CD4-positive, alpha-beta T cell (primary cell): ENCODE measurements at regions of chr16 and their contacts with region 1.

Region 1: GRCh38 chr16:67260426-67261075 is 11.8 kb downstream of the SLC9A5 start:
- DNase-seq: peak in 4 of 14 experiments; percentile 24 to 47 (median 32)
- ATAC-seq: no peak
- H3K4me3 ChIP-seq: no peak overlapping the region
- H3K4me3 Mint-ChIP-seq: no peak overlapping the region
- H3K27ac ChIP-seq: no peak overlapping the region
- H3K27ac Mint-ChIP-seq: no peak overlapping the region
- H3K4me1 ChIP-seq: no peaks in the 10 kb centered on the region
- H3K4me1 Mint-ChIP-seq: no peaks in the 10 kb centered on the region
- H3K27me3 ChIP-seq: peaks cover 6 to 12% of the 10 kb centered on the region in 2 experiments
- H3K27me3 Mint-ChIP-seq: peaks cover 12% of the 10 kb centered on the region
- CTCF ChIP-seq: peak; percentile 10

Region 2: GRCh38 chr16:67216612-67217490 is 43.7 kb before region 1 on chr16:
- CTCF ChIA-PET with region 1: no interaction called
- POLR2A ChIA-PET with region 1: no interaction called
- intact Hi-C with region 1: no loop called
- DNase-seq: no peak
- ATAC-seq: no peak
- H3K4me3 ChIP-seq: no peak overlapping the region
- H3K4me3 Mint-ChIP-seq: no peak overlapping the region
- H3K27ac ChIP-seq: no peak overlapping the region
- H3K27ac Mint-ChIP-seq: no peak overlapping the region
- H3K4me1 ChIP-seq: no peaks in the 10 kb centered on the region
- H3K4me1 Mint-ChIP-seq: no peaks in the 10 kb centered on the region
- H3K27me3 ChIP-seq: no peaks in the 10 kb centered on the region
- H3K27me3 Mint-ChIP-seq: no peaks in the 10 kb centered on the region
- CTCF ChIP-seq: no peak

Region 3: DNA sequence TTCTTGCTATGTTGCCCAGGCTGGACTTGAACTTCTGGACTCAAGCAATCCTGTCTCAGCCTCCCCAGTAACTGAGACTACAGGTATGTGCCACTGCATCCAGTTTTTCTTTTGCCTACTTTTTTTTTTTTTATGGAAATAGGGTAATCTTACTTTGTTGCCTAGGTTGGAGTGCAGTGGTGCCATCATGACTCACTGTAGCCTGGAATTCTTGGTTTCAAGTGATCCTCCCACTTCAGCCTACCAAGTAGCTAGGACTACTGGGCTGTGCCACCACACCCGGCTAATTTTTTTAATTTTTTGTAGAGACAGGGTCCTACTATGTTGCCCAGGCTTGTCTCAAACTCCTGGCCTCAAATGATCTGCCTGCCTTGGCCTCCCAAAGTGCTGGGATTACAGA is 76.1 kb after region 1 on chr16:
- CTCF ChIA-PET with region 1: no interaction called
- POLR2A ChIA-PET with region 1: no interaction called
- intact Hi-C with region 1: no loop called
- DNase-seq: no peak
- ATAC-seq: no peak
- H3K4me3 ChIP-seq: no peak overlapping the region
- H3K4me3 Mint-ChIP-seq: no peak overlapping the region
- H3K27ac ChIP-seq: no peak overlapping the region
- H3K27ac Mint-ChIP-seq: no peak overlapping the region
- H3K4me1 ChIP-seq: no peaks in the 10 kb centered on the region
- H3K4me1 Mint-ChIP-seq: no peaks in the 10 kb centered on the region
- H3K27me3 ChIP-seq: no peaks in the 10 kb centered on the region
- H3K27me3 Mint-ChIP-seq: no peaks in the 10 kb centered on the region
- CTCF ChIP-seq: no peak

Region 4: GRCh38 chr16:67393035-67393787 is 132.7 kb after region 1 on chr16 and contains the start of gene TPPP3:
- CTCF ChIA-PET with region 1: no interaction called
- POLR2A ChIA-PET with region 1: no interaction called
- intact Hi-C with region 1: loop called in 1 of 2 experiments (anchors 10 kb)
- DNase-seq: peak in 7 of 14 experiments; percentile 18 to 74 (median 43)
- ATAC-seq: peak; percentile 63
- H3K4me3 ChIP-seq: peak within 1 kb of the TSS; percentile 28
- H3K4me3 Mint-ChIP-seq: peak within 1 kb of the TSS; percentile 68
- H3K27ac ChIP-seq: no peak within 1 kb of the TSS
- H3K27ac Mint-ChIP-seq: no peak within 1 kb of the TSS
- H3K4me1 ChIP-seq: peaks cover 28% of the 10 kb centered on the region
- H3K4me1 Mint-ChIP-seq: peaks cover 8% of the 10 kb centered on the region
- H3K27me3 ChIP-seq: peaks cover 37 to 44% of the 10 kb centered on the region in 2 experiments
- H3K27me3 Mint-ChIP-seq: peaks cover 41% of the 10 kb centered on the region
- CTCF ChIP-seq: peak; percentile 32
- total RNA-seq, gene TPPP3: not detected

Region 5: GRCh38 chr16:67461600-67462592 is 201.3 kb after region 1 on chr16:
- CTCF ChIA-PET with region 1: no interaction called
- POLR2A ChIA-PET with region 1: no interaction called
- intact Hi-C with region 1: loop called in 1 of 2 experiments (anchors 10 kb)
- DNase-seq: no peak
- ATAC-seq: no peak
- H3K4me3 ChIP-seq: no peak overlapping the region
- H3K4me3 Mint-ChIP-seq: no peak overlapping the region
- H3K27ac ChIP-seq: no peak overlapping the region
- H3K27ac Mint-ChIP-seq: no peak overlapping the region
- H3K4me1 ChIP-seq: peaks cover 29% of the 10 kb centered on the region
- H3K4me1 Mint-ChIP-seq: peaks cover 38% of the 10 kb centered on the region
- H3K27me3 ChIP-seq: no peaks in the 10 kb centered on the region
- H3K27me3 Mint-ChIP-seq: no peaks in the 10 kb centered on the region
- CTCF ChIP-seq: no peak